BJ (cell line): ENCODE measurements at regions of chr3 and their contacts with region 1.

Region 1: GRCh38 chr3:44992555-44993470 is 16.8 kb downstream of the EXOSC7 start:
- DNase-seq: no peak
- H3K4me3 ChIP-seq: no peak overlapping the region
- H3K27me3 ChIP-seq: no peaks in the 10 kb centered on the region
- CTCF ChIP-seq: peak; percentile 72

Region 2: DNA sequence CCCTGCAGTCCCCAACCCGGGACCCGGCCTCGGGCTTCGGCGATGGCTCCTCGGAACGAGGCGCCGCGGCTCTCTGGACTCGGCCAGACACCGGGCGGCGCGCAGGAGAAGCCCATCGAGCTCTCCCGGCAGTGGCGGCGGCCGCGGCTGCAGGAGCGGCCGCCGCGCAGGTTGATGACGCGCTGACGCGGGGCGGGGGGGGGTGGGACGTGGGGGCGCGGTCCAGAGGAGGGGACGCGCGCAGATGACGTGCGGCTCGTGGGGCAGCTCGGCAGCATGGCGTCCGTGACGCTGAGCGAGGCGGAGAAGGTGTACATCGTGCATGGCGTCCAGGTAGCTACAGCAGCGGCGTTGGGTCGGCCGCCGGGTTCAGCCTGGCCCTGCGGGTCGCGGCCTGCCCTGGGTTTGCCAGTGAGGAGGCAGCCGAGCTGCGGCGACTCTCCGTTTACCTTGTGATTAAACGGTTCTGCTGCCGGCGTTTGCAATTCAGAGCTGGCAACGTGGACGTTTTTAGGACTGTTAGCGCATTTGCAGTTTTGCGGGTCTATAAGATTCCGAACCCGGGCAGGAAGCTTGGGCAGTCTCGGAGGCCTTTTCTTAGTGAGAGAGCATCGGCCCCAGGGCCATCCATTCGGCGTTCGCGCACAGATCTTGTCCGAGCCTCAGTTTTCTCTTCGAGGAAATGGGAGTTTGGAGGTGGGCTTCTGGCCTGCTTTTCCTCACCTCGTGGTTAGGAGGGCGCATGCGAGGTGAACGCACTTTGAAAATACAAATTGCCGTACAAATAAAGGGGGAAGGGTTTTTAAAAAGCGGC is 16.6 kb before region 1 on chr3 and contains the starts of genes EXOSC7 and ZDHHC3:
- CTCF ChIA-PET with region 1: interaction called, 14 read pairs
- POLR2A ChIA-PET with region 1: no interaction called
- DNase-seq: no peak
- H3K4me3 ChIP-seq: peak within 1 kb of the TSS; percentile 97
- H3K27me3 ChIP-seq: no peaks in the 10 kb centered on the region
- CTCF ChIP-seq: no peak
- polyA plus RNA-seq, gene EXOSC7: 45.4 and 50.6 TPM in 2 replicates
- polyA plus RNA-seq, gene ZDHHC3: 134 and 198 TPM in 2 replicates

Region 3: GRCh38 chr3:45010718-45011366 is 18.0 kb after region 1 on chr3:
- CTCF ChIA-PET with region 1: interaction called, 11 read pairs
- POLR2A ChIA-PET with region 1: no interaction called
- DNase-seq: peak; percentile 81
- H3K4me3 ChIP-seq: no peak overlapping the region
- H3K27me3 ChIP-seq: no peaks in the 10 kb centered on the region
- CTCF ChIP-seq: no peak

Region 4: DNA sequence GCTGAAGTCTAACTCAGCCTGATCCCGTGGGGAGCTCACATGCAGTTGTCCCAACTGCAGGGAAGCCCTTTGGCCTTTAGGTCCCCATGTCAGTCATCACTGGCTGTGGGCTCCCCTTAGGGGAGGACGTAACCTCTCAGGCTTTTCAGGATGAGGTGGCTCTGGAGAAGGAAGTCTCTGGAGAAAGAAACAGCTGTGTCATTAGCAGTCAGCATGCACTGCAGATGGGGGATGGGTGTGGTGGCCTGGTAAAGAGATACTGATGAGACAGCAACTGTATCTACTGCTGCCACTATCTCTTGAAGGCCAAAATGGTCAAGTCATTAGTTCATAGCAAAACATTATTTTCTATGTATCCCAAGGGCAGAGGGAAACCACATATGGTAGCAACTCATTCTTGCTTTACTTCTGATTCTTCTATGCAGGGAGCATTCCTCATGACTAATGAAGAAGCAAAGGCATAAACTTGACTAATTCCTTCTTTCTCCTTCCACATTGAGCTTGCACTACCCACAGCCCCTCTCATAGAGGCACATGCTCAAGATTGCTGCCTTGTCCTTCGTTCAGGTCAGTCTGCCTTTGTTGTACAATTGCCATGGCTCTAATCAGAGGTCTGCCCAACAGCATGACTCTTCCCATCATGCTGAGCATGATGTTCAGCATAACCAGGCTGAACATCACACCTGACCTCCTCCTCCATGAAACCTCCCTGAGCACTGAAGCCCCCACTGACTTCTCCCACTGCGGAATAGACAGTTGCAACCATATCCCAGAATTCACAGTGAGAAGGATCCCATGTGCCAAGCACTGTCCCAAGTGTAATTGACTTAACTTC is 281.1 kb after region 1 on chr3:
- CTCF ChIA-PET with region 1: no interaction called
- POLR2A ChIA-PET with region 1: no interaction called
- DNase-seq: peak; percentile 9
- H3K4me3 ChIP-seq: no peak overlapping the region
- H3K27me3 ChIP-seq: no peaks in the 10 kb centered on the region; the same call in 1 of the 2 replicates
- CTCF ChIP-seq: no peak